Breast epithelium (tissue), 4 donors: ENCODE measurements at regions of chr4 and their contacts with region 1.

Region 1: DNA sequence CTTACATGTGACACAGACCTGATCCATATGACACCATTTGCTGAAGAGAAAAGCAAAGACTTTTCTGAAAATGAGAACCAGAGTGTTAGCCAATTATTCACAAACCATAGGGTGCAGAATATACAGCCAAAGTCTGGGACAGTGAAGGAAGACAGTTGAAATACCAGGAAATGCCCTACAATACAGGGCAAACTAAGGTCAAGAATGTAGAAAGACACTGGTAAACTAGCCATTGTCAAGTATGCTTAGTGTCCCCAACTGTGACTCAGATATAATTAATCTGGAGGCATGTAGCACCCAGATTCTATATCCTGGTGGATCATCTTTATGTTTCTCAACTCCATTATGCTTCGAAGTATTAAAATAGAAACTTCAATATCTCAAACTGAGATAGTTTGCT is 200.9 kb upstream of the FSTL5 start:
- DNase-seq: no peak
- H3K4me3 ChIP-seq: no peak overlapping the region
- H3K27ac ChIP-seq: no peak overlapping the region
- H3K4me1 ChIP-seq: no peaks in the 10 kb centered on the region
- H3K27me3 ChIP-seq: no peaks in the 10 kb centered on the region
- CTCF ChIP-seq: no peak
- POLR2A ChIP-seq: no peak

Region 2: GRCh38 chr4:163228648-163229047 is 864.0 kb after region 1 on chr4:
- intact Hi-C with region 1: loop called (anchors 5 kb)
- DNase-seq: no peak
- H3K4me3 ChIP-seq: no peak overlapping the region
- H3K27ac ChIP-seq: no peak overlapping the region
- H3K4me1 ChIP-seq: no peaks in the 10 kb centered on the region
- H3K27me3 ChIP-seq: no peaks in the 10 kb centered on the region
- CTCF ChIP-seq: no peak
- POLR2A ChIP-seq: no peak